Right ventricle myocardium inferior (tissue), 1 donor: ENCODE measurements at regions of chr17 and their contacts with region 1.

Region 1: GRCh38 chr17:12545877-12546513 is 119.7 kb upstream of the MYOCD start:
- DNase-seq: no peak
- ATAC-seq: peak; percentile 80

Region 2: DNA sequence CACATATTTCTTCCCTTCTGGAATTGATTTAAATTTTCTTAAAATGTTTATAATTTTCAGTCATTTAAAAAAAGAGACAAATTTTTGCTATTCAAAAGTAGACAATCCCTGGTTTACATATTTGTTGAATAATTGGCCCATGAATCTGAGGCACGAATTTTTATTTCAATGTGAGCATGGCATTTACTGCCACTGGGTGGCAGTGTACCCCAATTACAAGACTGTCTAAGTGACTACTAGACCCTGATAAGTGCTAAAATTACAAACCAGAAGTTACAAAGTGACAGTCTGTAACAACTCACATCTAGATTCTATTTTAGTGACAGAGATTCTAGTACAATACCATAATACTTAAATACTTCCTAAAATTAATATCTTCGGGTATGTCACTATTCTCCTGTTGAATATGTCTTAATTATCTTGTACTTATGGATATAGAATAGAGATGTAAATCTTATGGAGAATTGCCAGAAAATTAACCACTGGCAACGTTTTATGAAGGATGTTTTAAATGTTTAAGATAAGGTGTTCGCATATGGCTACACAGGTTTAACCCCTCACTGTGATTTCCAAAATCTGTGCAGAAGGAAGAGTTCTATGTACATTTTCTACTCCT is 289.5 kb before region 1 on chr17:
- intact Hi-C with region 1: loop called (anchors 5 kb)
- DNase-seq: no peak
- ATAC-seq: peak; percentile 65

Region 3: DNA sequence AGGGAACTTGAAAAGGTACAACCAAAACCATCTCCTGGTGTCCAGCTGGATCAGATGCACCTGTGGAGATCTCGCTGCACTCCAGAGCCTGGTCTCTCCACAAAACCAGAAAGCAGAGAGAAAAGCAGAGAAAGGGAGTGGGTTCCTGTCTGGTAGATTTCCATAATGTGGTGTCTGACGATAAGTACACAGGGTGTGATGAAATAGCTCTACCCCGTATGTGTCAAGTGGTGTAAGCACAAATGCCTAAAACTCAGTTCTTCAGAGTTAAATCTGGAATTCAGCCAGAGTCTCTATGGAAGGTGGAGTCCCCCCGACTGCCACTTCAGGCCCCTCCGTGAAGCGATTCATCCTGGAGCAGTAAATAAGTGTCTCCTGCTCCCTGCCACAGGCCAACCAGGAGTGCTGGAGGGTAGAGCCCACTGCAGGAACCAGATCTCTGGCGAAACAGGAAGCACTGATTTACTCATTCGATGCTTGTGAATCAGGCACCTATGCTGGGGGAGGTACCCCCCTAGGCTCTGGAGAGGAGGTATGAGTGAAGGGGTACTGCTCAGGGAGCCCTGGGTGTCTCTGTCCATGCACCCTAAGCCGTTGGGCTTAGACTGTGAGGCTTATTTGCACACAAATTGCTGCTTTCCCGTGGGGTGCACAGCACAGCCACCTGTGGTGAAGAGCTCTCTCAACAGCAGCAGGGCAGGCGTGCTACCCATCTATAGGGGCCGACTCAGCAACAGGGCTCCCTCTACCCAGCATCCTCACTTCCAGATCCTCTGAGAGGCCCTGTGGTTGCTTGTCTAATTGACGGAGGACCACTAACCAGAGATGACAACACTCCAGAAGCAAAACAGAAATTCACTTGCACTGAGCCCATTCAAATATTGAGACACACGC is 22.6 kb after region 1 on chr17:
- intact Hi-C with region 1: no loop called
- DNase-seq: no peak
- ATAC-seq: no peak

Region 4: DNA sequence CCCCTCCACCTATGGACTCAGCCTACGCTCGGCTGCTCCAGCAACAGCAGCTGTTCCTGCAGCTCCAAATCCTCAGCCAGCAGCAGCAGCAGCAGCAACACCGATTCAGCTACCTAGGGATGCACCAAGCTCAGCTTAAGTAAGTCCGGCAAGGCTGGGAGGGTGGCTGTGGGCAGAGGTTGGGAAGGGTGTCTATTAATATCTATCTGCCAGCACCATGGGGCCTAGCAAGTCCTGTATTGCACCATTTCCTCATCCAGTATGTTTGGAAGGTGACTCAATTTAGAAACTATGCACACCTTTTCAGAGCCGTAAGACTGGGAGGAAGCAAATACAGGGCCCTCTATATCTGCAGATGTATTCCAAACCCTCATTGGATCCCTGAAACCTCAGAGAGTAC is 198.3 kb after region 1 on chr17:
- intact Hi-C with region 1: loop called (anchors 5 kb)
- DNase-seq: no peak
- ATAC-seq: peak; percentile 87